Psoas muscle (tissue), 8 donors: ENCODE measurements at regions of chr2 and their contacts with region 1.

Region 1: DNA sequence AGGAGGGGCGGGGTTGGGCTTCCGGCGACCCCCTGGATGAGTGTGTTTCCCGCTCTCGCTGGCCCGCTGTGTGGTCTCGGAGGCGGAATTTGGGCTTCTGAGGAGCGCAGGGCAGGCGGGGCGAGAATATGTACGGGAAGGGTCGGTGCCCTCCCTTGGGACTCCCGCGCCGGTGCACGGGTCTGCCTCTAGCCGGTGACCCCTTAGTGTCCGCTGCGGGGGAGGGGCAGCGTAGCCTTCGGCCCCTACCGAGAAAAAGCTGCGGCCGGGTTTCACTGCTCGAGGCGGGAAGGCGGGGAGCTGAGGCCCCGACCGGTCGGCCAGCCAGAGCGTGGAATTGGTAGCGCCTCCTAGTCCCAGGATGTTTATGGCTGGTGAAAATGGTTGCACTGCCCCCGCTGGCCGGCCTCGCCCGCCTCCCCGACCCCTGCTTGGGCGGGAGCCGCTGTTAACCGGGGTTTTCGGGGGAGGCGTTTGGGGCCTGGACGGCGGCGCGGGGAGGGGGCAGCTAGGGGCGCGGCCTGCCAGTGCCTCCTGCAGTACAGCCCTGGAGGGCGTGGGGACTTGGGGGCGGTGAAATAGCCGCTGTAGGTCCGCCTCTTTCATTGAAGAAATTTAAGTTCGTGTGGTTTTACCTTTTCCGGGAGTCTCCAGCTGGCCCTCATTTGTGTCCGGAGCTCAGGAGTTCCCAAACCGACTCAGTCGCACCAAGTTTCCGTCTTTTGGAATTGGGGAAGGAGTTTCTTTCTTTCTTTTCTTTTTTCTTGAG is at the start of gene UGP2:
- DNase-seq: peak; percentile 93 to 95
- ATAC-seq: peak; percentile 66 to 81 (median 75)
- H3K4me3 ChIP-seq: peak within 1 kb of the TSS; percentile 76
- H3K27ac ChIP-seq: peak within 1 kb of the TSS; percentile 96
- H3K4me1 ChIP-seq: peaks cover 30% of the 10 kb centered on the region
- H3K27me3 ChIP-seq: no peaks in the 10 kb centered on the region
- CTCF ChIP-seq: peak; percentile 23
- total RNA-seq, gene UGP2: 402 to 903 (median 596) TPM

Region 2: GRCh38 chr2:63500398-63500797 is 341.0 kb before region 1 on chr2:
- intact Hi-C with region 1: no loop called
- DNase-seq: no peak
- ATAC-seq: no peak
- H3K4me3 ChIP-seq: no peak overlapping the region
- H3K27ac ChIP-seq: no peak overlapping the region
- H3K4me1 ChIP-seq: peaks cover 7% of the 10 kb centered on the region
- H3K27me3 ChIP-seq: no peaks in the 10 kb centered on the region
- CTCF ChIP-seq: no peak

Region 3: DNA sequence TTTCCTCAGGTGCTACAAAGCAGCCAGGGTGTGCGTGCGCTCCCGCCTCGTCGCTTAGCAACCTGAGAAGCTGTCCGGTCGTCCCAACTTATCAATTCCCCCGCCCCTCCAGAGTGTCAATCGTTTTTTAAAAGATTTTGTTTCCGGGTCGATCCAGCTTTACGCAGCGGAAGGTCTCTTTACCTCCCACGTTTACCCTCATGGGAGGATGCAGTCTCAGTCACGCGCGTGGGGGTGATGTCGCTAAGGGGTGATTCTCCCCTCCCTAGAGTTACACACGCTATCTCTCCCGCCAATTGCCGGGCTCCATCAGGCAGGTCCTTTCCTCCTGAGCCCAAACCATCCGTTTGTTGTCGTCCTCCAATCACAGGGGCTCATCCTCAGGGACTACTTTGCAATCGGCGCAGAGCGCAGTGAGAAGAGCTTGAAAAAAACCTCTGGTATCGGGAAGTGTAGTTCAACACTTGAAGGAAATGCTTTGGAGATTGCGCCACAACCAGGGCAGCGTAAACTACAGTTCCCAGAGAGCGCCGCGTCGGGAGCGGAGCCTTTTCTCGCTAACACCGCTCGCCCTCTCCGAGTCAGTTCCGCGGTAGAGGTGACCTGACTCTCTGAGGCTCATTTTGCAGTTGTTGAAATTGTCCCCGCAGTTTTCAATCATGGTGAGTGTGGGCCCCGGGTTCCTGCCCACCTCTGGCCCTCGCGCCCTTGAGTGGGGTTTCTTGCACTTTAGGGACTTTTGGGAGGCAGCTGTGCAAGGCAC is 252.9 kb before region 1 on chr2 and contains the starts of genes MDH1 and WDPCP:
- intact Hi-C with region 1: loop called in 1 of 2 experiments (anchors 5 kb)
- DNase-seq: peak; percentile 93 to 95
- ATAC-seq: peak; percentile 91 to 95 (median 92)
- H3K4me3 ChIP-seq: peak within 1 kb of the TSS; percentile 79
- H3K27ac ChIP-seq: peak within 1 kb of the TSS; percentile 76
- H3K4me1 ChIP-seq: peaks cover 43% of the 10 kb centered on the region
- H3K27me3 ChIP-seq: no peaks in the 10 kb centered on the region
- CTCF ChIP-seq: no peak
- total RNA-seq, gene MDH1: 185 to 564 (median 310) TPM
- total RNA-seq, gene WDPCP: 4.4 to 17.2 (median 11.5) TPM

Region 4: GRCh38 chr2:63712748-63713147 is 128.7 kb before region 1 on chr2:
- intact Hi-C with region 1: loop called in 1 of 2 experiments (anchors 5 kb)
- DNase-seq: peak; percentile 21 to 53
- ATAC-seq: peak; percentile 91 to 97 (median 94)
- H3K4me3 ChIP-seq: no peak overlapping the region
- H3K27ac ChIP-seq: peak overlapping the region; percentile 77
- H3K4me1 ChIP-seq: peaks cover 21% of the 10 kb centered on the region
- H3K27me3 ChIP-seq: no peaks in the 10 kb centered on the region
- CTCF ChIP-seq: no peak

Region 5: DNA sequence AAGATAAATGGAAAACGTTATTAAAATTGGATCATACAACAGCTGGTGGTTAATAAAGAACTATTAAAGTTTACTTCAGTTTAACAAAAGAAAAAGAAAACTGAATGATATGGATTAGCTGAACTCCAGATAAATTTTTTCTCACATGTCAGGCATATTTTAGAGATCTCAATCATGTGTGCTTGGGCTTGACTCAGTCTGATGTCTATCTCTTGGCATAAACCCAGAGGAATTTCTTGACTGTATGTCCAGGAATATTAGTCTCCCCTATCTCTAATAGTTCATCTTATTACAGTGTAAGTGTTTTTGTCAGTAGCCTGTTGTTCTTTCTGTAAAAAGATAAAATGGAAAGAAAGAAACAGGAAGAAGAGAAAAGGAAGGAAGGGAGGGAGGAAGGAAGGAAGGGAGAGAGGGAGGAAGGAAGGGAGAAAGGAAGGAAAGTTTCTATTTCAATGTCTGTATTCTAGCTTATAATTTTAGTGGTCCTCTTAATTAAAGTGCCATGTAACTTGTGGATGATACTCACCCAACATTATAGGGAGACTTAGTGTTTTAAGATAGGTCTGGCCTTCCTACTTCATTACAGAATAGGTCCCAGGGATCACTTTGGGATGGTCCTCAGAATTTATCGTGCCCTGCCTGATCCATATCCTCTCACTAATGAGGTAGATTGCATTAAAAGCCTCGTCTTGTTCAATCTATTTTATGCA is 99.4 kb before region 1 on chr2:
- intact Hi-C with region 1: loop called in 1 of 2 experiments (anchors 5 kb)
- DNase-seq: no peak
- ATAC-seq: no peak
- H3K4me3 ChIP-seq: no peak overlapping the region
- H3K27ac ChIP-seq: peak overlapping the region; percentile 87
- H3K4me1 ChIP-seq: peaks cover 32% of the 10 kb centered on the region
- H3K27me3 ChIP-seq: no peaks in the 10 kb centered on the region
- CTCF ChIP-seq: no peak

Region 6: DNA sequence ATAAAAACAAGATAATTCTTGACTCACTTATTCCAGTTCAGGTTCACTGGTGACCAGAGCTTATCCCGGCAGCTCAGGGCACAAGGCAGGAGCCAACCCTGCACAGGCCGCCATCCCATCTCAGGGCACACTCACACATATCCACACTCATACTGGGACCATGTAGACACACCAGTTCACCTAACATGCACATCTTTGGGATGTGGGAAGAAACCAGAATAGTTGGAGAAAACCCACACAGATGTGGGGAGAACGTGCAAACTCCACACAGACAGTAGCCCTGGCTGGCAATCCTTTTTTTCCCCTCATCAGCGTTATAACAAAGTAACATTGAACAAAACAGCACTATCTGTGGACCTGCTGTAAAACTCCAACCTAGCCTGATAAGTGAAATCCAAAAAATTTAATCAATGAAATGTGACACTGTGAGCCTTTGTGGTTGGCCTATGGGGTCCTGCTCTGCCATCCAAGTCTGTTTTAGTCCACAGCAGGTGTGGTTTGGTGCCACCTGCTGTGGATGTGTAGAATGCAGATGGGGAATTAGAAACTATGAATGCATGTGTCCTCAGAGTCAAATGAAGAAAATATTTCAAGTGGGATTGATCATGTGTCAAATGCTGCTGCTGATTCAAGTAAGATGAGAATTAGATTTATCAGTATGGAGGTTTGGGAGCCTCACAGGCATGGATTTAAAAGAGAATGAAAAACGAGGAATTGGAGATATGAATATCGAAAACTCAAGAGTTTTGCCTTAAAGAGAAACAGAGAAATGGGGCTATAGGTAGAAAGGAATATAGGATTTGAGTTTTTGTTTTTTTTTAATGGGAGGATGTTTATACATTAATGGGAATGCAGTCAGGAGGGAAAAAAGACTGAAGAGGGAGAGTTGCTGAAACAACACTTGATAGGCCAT is 47.3 kb after region 1 on chr2:
- intact Hi-C with region 1: loop called (anchors 5 kb)
- DNase-seq: peak; percentile 27 to 56
- ATAC-seq: peak; percentile 76 to 83 (median 83)
- H3K4me3 ChIP-seq: no peak overlapping the region
- H3K27ac ChIP-seq: peak overlapping the region; percentile 66
- H3K4me1 ChIP-seq: peaks cover 36% of the 10 kb centered on the region
- H3K27me3 ChIP-seq: no peaks in the 10 kb centered on the region
- CTCF ChIP-seq: peak; percentile 82